GM12878 (cell line): ENCODE measurements at regions of chr2 and their contacts with region 1.

Region 1: DNA sequence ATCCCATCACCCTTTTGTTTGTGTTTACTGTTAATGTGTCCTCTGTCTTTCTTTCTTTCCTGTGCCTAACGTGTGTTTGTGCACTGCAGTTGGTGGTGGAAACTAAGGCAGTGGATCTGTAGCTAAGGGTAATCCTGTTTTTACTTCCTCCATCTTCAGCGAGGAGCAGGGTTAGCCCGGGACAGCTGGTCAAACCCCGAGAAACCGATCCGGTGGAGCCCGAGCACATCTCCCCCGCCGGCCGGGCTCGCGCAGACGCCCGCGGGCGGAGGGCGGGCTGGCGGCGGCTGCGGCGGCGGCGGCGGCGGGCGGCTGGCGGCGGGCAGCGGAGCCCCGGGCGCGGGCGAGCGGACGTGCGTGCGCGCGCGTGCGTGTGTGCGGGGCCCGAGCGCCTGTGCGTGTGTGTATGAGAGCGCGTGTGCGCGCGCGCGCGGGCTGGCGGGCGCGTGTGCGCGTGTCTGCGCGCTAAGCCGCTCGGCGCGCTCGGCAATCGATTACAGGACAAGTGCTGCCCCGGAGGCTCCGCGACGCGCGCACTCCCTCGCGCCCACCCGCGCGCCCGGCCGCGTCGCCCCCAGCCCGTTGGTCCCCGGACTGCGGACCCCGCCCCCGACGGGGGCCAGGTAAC is at the start of gene IKZF2:
- DNase-seq: peak; percentile 79
- ATAC-seq: peak; percentile 45
- H3K4me3 ChIP-seq: peak within 1 kb of the TSS; percentile 85
- H3K27ac ChIP-seq: peak within 1 kb of the TSS; percentile 92
- H3K4me1 ChIP-seq: peaks cover 4% of the 10 kb centered on the region
- H3K27me3 ChIP-seq: no peaks in the 10 kb centered on the region
- CTCF ChIP-seq: no peak
- EP300 ChIP-seq: peak in 1 of 2 experiments; percentile 19; a peak in 1 of 4 replicates
- POLR2A ChIP-seq: peak; percentile 88
- RAD21 ChIP-seq: no peak
- polyA plus RNA-seq, gene IKZF2: 15.2 to 22.5 TPM

Region 2: DNA sequence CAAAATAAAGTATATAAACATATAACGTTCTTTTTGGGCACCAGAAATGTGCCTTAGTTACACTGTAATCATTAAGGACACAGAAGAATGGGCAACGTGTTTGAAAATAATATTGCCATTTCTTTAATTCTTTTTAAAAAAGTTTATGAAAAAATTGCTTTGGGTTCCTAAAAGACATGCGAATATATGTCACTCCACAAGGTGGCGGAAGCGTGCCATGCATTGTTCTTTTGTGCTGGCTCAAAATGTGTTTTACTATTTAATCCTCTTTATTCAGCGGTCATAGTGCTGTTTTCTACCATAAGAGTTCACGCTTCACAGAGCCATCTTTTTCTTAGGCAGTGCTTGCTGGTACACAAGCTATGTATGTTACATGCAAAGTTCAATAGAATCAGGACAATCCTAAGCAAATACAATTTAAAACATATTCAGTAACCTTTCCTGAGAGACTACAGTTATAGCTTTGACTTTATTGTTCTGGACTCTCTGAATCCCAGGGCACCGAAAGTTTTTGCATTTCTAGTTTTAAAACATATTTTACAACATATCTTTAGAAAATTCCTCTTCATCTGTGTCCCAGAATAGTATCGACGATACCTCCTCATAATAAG is 465.2 kb before region 1 on chr2:
- CTCF ChIA-PET with region 1: interaction called, 5 read pairs
- POLR2A ChIA-PET with region 1: no interaction called
- RAD21 ChIA-PET with region 1: interaction called, 7 read pairs
- SMC1A ChIA-PET with region 1: interaction called, 7 read pairs
- in situ Hi-C with region 1: loop called (anchors 5 kb)
- intact Hi-C with region 1: loop called (anchors 1 kb)
- DNase-seq: peak; percentile 60
- ATAC-seq: peak; percentile 84
- H3K4me3 ChIP-seq: no peak overlapping the region
- H3K27ac ChIP-seq: no peak overlapping the region
- H3K4me1 ChIP-seq: peaks cover 4% of the 10 kb centered on the region; the same call in 1 of the 2 replicates
- H3K27me3 ChIP-seq: no peaks in the 10 kb centered on the region
- CTCF ChIP-seq: peak; percentile 78 to 90 (median 85)
- EP300 ChIP-seq: no peak
- POLR2A ChIP-seq: no peak
- RAD21 ChIP-seq: peak; percentile 99

Region 3: DNA sequence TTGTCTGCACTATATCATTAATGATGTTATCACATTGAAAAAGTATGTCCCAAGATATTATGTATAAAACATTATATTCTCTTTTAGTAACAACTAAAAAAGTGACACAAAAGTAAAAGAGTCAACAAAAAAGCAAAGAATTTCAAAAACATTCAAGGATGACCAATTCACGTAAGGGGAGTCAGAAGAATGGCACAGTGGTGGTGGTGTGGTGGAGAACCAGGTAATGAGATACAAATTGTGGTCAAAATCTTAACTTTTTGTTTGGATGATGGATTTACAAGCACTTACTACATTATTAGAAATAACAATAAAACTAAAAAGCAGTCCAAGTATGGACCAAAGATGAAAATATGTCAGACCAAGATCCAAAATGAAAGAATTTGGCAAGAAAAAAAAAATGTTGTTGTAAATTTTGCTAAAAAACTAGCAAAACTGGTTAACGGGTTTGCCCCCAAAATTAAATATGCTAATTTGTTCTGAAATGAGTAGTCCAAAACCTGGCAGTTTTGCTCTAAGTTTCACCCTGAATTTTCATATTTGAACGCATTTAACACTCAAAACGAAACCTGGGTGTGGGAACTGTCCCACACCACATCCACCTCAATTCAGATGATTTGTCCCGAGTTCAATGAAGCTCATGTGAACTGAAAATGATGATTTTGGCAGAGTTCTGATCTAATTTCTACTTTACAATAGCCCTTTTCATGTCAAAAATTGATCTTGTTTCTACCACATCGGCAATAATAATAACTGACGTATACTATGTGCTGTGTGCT is 136.0 kb before region 1 on chr2:
- CTCF ChIA-PET with region 1: interaction called, 88 read pairs
- POLR2A ChIA-PET with region 1: interaction called, 183 read pairs
- RAD21 ChIA-PET with region 1: interaction called, 386 read pairs
- SMC1A ChIA-PET with region 1: interaction called, 430 read pairs
- in situ Hi-C with region 1: loop called (anchors 5 kb)
- intact Hi-C with region 1: loop called (anchors 1 kb)
- DNase-seq: peak; percentile 98
- ATAC-seq: peak; percentile 55
- H3K4me3 ChIP-seq: peak overlapping the region; percentile 65
- H3K27ac ChIP-seq: peak overlapping the region; percentile 96
- H3K4me1 ChIP-seq: peaks cover 20% of the 10 kb centered on the region
- H3K27me3 ChIP-seq: no peaks in the 10 kb centered on the region
- CTCF ChIP-seq: no peak
- EP300 ChIP-seq: peak; percentile 92 to 93
- POLR2A ChIP-seq: no peak
- RAD21 ChIP-seq: no peak

Region 4: DNA sequence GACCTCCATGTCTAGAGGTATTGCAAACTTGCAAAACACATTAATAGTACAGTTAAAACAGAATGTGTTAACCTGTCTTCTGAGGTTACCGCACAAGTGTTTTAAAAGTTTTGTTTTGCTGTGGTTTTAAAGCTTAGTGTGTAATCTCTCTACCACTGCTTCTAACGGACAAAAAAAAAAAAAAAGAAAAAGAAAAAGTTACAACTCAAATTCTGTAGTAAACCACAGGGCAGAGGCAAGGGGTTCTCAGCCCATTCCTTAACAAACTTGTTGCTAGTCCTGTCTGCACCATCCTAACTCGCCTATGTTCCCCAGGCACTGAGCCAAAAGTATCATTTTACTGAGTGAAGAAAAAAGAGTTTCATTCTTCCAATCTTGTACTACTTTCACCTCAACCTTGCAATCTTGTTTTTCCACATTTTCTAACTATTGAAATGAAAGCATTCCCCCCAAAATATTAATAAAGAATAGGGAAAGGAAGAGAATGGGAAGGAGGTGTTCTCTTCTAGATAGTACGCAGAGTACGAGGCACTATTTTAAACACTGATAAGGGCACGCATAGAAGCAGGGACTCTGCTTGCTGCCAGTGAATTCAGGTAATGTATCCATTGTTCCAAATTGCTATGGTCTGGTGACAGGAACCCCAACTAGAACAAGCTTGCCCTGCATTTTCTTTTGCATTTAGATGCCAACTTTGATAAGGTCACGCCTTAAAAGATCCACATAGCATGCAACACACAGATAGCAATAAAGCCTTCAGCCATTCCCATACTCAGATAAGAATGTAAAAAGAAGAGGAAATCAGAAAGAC is 47.3 kb before region 1 on chr2:
- CTCF ChIA-PET with region 1: interaction called, 7 read pairs
- POLR2A ChIA-PET with region 1: interaction called, 6 read pairs
- RAD21 ChIA-PET with region 1: interaction called, 5 read pairs
- SMC1A ChIA-PET with region 1: interaction called, 16 read pairs
- in situ Hi-C with region 1: no loop called
- intact Hi-C with region 1: no loop called
- DNase-seq: no peak
- ATAC-seq: peak; percentile 57
- H3K4me3 ChIP-seq: 0 out of 2 replicates have a peak overlapping the region, but pooled peaks have one; percentile 3
- H3K27ac ChIP-seq: no peak overlapping the region
- H3K4me1 ChIP-seq: no peaks in the 10 kb centered on the region; the same call in 1 of the 2 replicates
- H3K27me3 ChIP-seq: no peaks in the 10 kb centered on the region
- CTCF ChIP-seq: no peak
- EP300 ChIP-seq: no peak
- POLR2A ChIP-seq: no peak
- RAD21 ChIP-seq: no peak

Region 5: DNA sequence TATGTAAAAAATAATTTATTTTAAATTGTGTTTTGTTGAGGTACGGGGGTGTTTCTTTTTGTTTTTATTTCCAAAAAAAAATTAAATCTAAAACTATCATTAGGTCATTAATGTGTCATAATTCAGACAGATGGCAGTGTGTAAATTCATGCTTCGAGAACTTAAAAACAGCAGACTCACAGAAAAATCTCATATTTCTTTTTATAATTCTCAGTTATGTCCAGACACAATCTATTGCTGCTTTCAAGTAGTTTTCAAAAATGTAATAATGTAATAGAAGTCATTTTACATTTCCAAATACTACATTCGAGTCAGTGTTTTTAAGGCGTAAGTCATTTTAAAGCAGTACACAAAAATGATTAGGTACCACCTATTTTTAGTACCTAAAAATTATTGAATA is 14.5 kb before region 1 on chr2:
- CTCF ChIA-PET with region 1: interaction called, 20 read pairs
- POLR2A ChIA-PET with region 1: interaction called, 5 read pairs
- RAD21 ChIA-PET with region 1: interaction called, 10 read pairs
- SMC1A ChIA-PET with region 1: interaction called, 29 read pairs
- in situ Hi-C with region 1: no loop called
- intact Hi-C with region 1: no loop called
- DNase-seq: no peak
- ATAC-seq: no peak
- H3K4me3 ChIP-seq: no peak overlapping the region
- H3K27ac ChIP-seq: no peak overlapping the region
- H3K4me1 ChIP-seq: no peaks in the 10 kb centered on the region
- H3K27me3 ChIP-seq: no peaks in the 10 kb centered on the region
- CTCF ChIP-seq: no peak
- EP300 ChIP-seq: no peak
- POLR2A ChIP-seq: no peak
- RAD21 ChIP-seq: no peak

Region 6: DNA sequence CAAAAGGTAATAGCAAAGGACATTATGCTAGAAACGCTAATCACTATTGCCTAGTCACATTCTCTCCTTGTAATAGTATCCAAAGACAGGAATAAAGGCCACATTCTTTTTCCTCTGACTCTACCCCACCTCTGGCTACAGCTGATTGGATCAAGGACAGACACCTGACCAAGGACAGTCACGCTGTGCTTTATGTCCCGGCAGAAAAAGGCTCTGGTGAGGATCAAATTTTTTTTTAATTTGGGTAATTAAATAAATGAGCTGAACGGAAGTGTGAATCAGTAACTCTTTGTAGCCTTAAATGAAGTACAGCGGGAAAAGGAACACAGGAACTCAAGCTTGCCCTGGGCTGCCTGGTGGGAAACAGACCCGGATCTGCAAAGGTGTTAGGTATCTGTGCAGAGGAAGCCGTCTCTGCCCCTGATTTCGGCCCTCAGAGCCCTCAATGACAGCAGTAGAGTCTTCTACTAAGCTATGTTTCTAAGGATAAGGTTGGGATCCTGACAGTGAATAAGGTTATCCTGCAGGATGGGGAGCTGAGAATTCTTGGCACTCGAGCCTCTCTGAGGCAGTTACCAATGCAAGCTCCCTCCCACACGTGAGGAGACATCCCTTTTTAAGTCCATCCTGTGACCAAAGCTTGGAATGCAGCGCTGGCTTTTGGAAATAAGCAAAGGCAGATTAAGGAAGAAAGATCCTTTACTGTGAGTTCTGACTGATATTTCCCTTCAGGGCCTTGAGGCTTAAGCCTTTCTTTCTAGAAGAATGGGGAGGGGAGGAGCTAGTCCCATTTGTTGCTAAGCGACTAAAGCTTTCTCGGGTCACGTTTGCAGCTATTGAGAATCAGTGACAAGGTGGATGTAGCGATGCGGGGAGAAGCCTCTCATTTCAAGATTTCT is 37.7 kb after region 1 on chr2:
- CTCF ChIA-PET with region 1: interaction called, 5 read pairs
- POLR2A ChIA-PET with region 1: interaction called, 5 read pairs
- RAD21 ChIA-PET with region 1: interaction called, 15 read pairs
- SMC1A ChIA-PET with region 1: interaction called, 22 read pairs
- in situ Hi-C with region 1: no loop called
- intact Hi-C with region 1: no loop called
- DNase-seq: no peak
- ATAC-seq: no peak
- H3K4me3 ChIP-seq: no peak overlapping the region
- H3K27ac ChIP-seq: no peak overlapping the region
- H3K4me1 ChIP-seq: peaks cover 12% of the 10 kb centered on the region
- H3K27me3 ChIP-seq: no peaks in the 10 kb centered on the region
- CTCF ChIP-seq: no peak
- EP300 ChIP-seq: no peak
- POLR2A ChIP-seq: no peak
- RAD21 ChIP-seq: no peak

Region 7: GRCh38 chr2:213238753-213239495 is 87.4 kb after region 1 on chr2:
- CTCF ChIA-PET with region 1: interaction called, 29 read pairs
- POLR2A ChIA-PET with region 1: interaction called, 232 read pairs
- RAD21 ChIA-PET with region 1: interaction called, 540 read pairs
- SMC1A ChIA-PET with region 1: interaction called, 467 read pairs
- in situ Hi-C with region 1: no loop called
- intact Hi-C with region 1: no loop called
- DNase-seq: no peak
- ATAC-seq: peak; percentile 35
- H3K4me3 ChIP-seq: peak overlapping the region; percentile 58
- H3K27ac ChIP-seq: peak overlapping the region; percentile 98
- H3K4me1 ChIP-seq: peaks cover 47% of the 10 kb centered on the region
- H3K27me3 ChIP-seq: no peaks in the 10 kb centered on the region
- CTCF ChIP-seq: no peak
- EP300 ChIP-seq: peak; percentile 8 to 53; a peak in 1 of 4 replicates
- POLR2A ChIP-seq: no peak
- RAD21 ChIP-seq: no peak